Gastrocnemius medialis (tissue), 4 donors: ENCODE measurements at regions of chr20 and their contacts with region 1.

Region 1: GRCh38 chr20:54649511-54649962 is 174.1 kb downstream of the DOK5 start:
- DNase-seq: peak; percentile 13 to 54
- ATAC-seq: peak; percentile 50 to 65
- H3K4me3 ChIP-seq: no peak overlapping the region
- H3K27ac ChIP-seq: no peak overlapping the region
- H3K4me1 ChIP-seq: no peaks in the 10 kb centered on the region
- H3K27me3 ChIP-seq: no peaks in the 10 kb centered on the region
- CTCF ChIP-seq: peak in 4 of 5 experiments; percentile 26 to 71 (median 62)
- POLR2A ChIP-seq: no peak

Region 2: GRCh38 chr20:54093423-54094267 is 555.9 kb before region 1 on chr20:
- in situ Hi-C with region 1: loop called in 2 of 4 experiments (anchors 10 kb)
- intact Hi-C with region 1: loop called (anchors 2 kb)
- DNase-seq: no peak
- ATAC-seq: no peak
- H3K4me3 ChIP-seq: no peak overlapping the region
- H3K27ac ChIP-seq: no peak overlapping the region
- H3K4me1 ChIP-seq: no peaks in the 10 kb centered on the region
- H3K27me3 ChIP-seq: no peaks in the 10 kb centered on the region
- CTCF ChIP-seq: no peak
- POLR2A ChIP-seq: no peak

Region 3: DNA sequence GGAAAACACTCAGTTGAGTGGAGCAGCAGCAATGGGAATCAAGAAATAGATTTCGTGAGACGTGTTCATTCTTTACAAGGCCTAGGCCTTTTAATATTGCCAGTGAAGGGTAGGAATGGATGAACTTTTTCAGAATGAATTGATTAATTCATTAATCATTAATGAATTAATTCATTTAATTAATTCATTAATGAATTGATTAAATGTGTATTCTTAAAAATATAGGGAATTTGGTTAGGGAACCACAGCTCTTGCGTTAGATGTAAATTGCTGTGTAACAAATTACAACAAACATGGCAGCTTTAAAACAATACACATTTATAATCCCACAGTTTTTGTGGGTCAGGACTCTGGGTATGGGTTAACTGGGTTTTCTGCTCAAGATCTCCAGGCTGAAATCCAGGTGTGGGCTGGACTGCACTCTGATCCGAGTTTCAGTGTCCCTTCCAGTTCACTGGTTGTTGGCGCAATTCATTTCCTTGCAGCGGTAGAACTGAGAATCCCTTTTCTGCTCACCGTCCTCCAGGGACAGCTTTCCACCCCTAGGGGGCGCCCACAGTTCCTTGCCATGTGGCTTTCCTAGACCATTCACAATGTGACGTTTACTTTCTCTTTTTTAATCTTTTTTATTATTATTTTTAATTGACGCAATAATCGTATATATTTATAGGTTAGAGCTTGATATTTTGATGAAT is 546.3 kb before region 1 on chr20:
- in situ Hi-C with region 1: loop called (anchors 10 to 25 kb)
- intact Hi-C with region 1: no loop called
- DNase-seq: peak in 1 of 2 donors; percentile 9
- ATAC-seq: no peak
- H3K4me3 ChIP-seq: no peak overlapping the region
- H3K27ac ChIP-seq: no peak overlapping the region
- H3K4me1 ChIP-seq: no peaks in the 10 kb centered on the region
- H3K27me3 ChIP-seq: no peaks in the 10 kb centered on the region
- CTCF ChIP-seq: peak in 4 of 5 experiments; percentile 22 to 67 (median 44)
- POLR2A ChIP-seq: no peak

Region 4: DNA sequence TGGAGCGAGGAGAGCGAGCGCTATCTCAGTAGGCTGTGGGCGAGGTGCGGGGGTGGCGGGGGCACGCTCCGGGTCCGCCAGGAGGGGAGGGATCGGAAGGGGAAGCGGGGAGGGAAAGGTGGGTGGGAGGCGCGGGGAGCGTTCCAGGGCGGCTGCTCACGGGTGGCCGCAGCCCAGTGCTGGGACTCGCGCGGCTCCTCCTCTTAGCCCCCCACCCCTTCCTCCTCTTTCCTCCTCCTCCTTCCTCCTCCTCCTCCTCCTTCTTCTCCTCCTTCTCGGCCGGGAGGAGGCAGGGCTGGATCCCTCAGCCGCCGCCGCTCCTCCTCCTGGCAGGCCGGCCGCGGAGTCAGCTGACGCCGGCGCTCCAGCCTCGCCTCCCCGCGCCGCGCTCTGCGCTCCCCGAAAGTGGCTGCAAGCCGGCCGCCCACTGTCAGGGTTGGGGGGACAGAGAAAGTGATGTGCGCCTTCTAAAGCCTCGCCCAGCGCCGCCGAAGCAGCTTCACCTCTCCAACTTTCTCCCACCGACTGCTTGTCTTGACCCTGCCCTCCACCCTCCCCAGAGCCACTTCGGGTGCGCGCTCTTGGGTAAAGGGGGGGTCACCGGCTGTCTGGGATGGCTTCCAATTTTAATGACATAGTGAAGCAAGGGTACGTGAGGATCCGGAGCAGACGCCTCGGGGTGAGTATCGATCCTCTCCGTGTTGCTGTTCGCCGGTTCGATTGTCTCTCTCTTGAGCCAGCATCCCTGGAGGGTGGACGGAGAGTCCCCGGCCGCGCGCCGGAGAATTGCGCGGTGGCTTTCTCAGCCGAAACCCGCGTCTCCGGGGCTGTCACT is 174.0 kb before region 1 on chr20 and contains the start of gene DOK5:
- in situ Hi-C with region 1: loop called in 2 of 4 experiments (anchors 25 kb)
- intact Hi-C with region 1: no loop called
- DNase-seq: peak; percentile 15 to 21
- ATAC-seq: peak; percentile 63 to 67
- H3K4me3 ChIP-seq: peak within 1 kb of the TSS; percentile 72 to 85 (median 80)
- H3K27ac ChIP-seq: peak within 1 kb of the TSS; percentile 66 to 80 (median 68)
- H3K4me1 ChIP-seq: peaks cover 9 to 11% of the 10 kb centered on the region in 2 donors
- H3K27me3 ChIP-seq: no peaks in the 10 kb centered on the region
- CTCF ChIP-seq: no peak
- POLR2A ChIP-seq: no peak
- total RNA-seq, gene DOK5: 1.2 to 12.7 (median 7.4) TPM